Psoas muscle (tissue), 8 donors: ENCODE measurements at regions of chr20 and their contacts with region 1.

Region 1: GRCh38 chr20:45322952-45323383 is 14.9 kb upstream of the MATN4 start:
- DNase-seq: peak; percentile 75 to 90
- ATAC-seq: peak; percentile 75 to 88 (median 83)
- H3K4me3 ChIP-seq: no peak overlapping the region
- H3K27ac ChIP-seq: peak overlapping the region; percentile 69
- H3K4me1 ChIP-seq: peaks cover 3% of the 10 kb centered on the region
- H3K27me3 ChIP-seq: no peaks in the 10 kb centered on the region
- CTCF ChIP-seq: peak; percentile 58

Region 2: DNA sequence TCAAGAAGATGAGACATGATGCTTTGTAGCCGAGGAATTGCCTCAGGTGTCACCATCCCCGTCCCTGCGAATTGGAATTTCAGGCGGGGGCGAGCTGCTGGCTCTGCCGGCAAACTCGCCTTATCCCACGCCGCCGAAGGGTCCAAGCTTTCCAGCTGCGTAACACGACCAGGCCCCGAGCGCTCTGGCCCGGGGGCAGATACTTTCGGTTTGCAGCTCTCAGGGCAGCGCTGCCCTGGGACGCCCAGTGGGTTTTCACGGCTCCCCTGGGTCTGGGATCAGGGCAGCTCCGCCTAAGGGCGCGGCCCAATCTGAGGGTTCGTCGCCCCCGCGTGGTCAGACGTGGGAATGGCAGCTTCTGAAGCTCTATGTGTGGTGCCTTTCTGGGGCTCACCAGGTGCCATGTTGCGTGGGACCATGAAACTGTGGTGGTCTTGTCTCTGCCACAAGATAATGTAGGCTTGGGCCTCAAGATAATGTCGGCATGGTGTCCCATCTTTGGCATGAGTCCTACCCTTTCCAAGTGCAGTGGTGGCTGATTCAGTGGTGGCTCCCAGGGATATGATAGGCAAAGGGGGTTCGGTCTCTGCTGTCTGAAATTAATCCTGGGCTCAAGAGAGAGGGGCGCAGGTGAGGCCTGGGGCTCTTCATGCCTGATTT is 113.9 kb after region 1 on chr20:
- intact Hi-C with region 1: loop called (anchors 1 to 2 kb)
- DNase-seq: peak; percentile 89 to 94
- ATAC-seq: peak; percentile 99 to 100 (median 99)
- H3K4me3 ChIP-seq: peak overlapping the region; percentile 83
- H3K27ac ChIP-seq: peak overlapping the region; percentile 72
- H3K4me1 ChIP-seq: peaks cover 7% of the 10 kb centered on the region
- H3K27me3 ChIP-seq: no peaks in the 10 kb centered on the region
- CTCF ChIP-seq: peak; percentile 97